ENCODE measurements at regions of chr20 and their contacts with region 1.

Region 1: DNA sequence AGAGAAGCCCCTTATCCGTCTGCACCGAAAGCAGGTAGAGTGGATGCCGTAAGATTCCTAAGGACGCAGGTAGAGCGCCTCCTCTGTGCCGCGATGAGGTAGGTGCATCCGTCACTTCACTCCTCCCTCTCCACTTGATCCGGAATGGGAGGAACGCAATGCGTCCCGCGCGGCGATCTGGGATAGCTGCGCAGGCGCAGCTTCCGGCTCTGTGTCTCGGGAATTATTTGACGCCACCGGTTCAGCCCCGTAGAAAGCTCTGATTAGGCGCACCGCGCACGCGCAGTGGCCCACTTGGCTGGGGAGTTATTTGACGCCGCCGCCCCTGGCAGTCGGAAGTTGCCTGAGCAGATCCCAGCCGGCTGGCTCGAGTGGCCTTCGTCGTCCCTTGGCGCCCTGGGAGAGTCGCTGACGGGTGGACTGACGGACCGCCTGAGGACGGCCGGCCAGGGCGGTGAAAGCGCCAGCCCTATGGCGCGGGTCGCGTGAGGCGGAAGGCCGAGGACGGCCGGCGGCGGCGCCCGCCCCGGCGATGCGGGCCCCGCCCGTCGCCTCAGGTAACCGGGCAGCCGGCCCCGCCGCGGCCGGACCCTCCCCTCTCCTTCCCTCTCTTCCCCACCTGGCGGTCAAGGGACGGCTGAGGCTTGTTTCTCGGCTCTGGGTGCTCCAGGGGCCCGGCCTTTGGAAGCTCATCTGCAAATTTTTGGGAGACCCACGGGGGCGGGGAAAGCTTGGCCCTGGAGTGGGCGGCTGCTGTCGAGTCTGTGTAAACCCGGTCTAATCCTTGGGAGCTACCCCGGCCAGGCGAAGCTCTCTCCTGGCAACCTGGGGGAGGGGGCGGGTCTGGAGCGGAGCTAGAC is at the start of gene RALGAPB:
- DNase-seq: peak; percentile 66
- H3K4me3 ChIP-seq: peak within 1 kb of the TSS; percentile 83
- CTCF ChIP-seq: peak; percentile 54

Region 2: DNA sequence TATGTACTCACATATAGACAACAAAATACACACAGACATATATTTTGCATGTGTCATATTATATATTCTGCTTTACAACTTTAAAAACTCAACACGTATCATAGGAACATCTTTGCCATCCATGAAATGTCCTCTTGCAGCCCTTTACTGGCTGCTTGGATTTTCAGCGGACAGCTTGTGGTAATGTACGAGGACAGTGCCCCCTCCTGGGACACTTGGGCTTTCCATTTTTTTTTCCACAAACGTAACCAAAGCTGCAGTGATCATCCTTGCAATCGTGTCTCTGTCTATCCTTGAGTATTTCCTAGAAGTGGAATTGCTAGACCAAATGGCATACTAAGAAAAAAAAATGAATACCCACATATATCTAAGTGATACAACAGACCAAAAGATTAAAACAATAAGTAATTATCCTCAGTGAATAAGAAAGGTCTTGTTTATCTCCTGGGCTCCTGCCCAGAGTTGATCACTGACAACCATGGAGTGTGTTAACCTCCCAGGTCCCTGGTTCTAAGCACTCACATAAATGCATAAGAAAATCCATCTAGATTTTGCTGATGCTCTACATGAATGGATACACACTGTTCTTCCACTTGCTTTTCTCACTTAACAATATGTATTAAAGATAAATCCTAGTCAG is 150.7 kb before region 1 on chr20:
- CTCF ChIA-PET with region 1: no interaction called
- POLR2A ChIA-PET with region 1: no interaction called
- DNase-seq: no peak
- H3K4me3 ChIP-seq: no peak overlapping the region
- CTCF ChIP-seq: peak; percentile 58

Region 3: DNA sequence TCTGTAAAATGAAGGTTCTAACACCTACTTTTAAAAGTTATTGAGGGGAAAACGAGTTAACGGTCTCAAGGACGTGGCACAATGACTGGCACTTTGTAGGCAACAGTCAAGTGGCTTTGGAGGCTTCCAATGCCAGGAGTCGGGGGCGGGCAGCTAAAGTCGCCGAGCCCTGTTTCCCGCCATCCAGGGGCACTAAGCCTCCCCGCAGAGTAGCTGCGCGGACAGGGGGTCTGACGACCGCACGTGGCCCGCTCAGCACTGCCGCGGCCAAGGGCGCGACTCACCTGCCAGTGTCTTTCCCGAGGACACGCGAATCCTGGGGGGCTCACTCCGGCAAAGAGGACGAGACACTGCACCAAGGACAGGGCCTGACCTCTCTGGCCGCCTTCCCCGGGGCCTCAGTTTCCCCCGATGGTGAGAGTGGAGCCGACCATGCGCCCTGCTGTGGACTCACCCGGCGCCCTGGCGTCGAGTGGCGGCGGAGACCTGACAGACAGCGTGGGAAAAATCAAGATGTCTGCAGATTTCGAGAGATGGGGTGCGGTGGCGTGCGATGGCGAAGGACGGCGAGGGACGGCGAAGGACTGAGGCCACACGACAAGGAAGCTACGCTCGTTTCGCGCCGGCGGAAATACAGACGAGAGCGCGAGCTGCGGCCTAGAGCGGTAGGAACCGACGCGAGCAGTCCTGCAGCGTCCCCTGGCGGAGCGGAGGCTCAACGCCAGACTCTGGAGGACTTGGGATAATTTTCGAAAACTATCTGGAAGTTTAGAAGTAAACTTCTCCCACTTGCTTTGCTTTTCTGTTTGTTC is 37.8 kb before region 1 on chr20 and contains the start of gene SNHG17:
- CTCF ChIA-PET with region 1: interaction called, 15 read pairs
- POLR2A ChIA-PET with region 1: interaction called, 12 read pairs
- DNase-seq: peak; percentile 76
- H3K4me3 ChIP-seq: peak within 1 kb of the TSS; percentile 92
- CTCF ChIP-seq: peak; percentile 99

Region 4: DNA sequence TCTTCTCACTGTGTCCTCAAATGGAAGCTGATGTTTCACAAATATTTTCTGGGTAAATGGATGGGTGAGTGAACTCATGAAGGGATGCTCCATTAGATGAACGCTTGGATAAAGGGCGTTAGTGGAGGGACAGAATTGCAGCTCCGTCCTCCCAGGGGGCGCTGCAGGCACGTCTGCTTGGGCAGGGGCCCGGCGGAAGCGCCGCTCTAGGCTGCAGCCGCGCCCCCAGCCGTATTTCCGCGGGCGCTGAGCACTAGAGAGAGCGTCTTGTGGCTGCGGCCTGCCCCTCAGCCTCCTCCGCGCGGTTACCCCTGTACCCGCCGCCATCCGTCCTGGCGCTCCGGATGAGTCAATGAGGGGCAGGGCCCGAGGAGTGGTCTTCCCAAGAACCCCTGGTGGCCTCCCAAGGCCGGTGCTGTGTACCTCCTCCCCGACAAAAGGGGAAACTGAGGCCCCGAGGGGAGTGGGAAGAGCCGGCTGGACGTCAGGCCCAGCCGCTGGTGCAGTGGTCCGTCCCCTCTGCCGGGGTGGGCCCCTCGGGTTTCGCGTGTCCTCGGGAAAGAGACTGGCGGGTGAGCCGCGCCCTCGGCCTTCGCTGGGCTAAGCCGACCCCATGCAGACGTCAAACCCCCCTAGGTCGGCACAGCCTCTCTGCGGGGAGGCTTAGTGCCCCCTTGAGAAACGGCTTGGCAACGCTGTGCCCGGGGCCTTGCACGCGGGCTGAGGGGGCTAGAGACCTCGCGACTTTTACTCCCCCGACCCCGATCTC is 26.1 kb before region 1 on chr20:
- CTCF ChIA-PET with region 1: interaction called, 47 read pairs
- POLR2A ChIA-PET with region 1: interaction called, 6 read pairs
- DNase-seq: peak; percentile 67
- H3K4me3 ChIP-seq: peak overlapping the region; percentile 83
- CTCF ChIP-seq: peak; percentile 97

Region 5: GRCh38 chr20:38453941-38454340 is 18.8 kb before region 1 on chr20:
- CTCF ChIA-PET with region 1: interaction called, 47 read pairs
- POLR2A ChIA-PET with region 1: interaction called, 6 read pairs
- DNase-seq: no peak
- H3K4me3 ChIP-seq: no peak overlapping the region
- CTCF ChIP-seq: no peak

Region 6: GRCh38 chr20:38485041-38485440 is 12.3 kb after region 1 on chr20:
- CTCF ChIA-PET with region 1: interaction called, 32 read pairs
- POLR2A ChIA-PET with region 1: no interaction called
- DNase-seq: no peak
- H3K4me3 ChIP-seq: no peak overlapping the region
- CTCF ChIP-seq: no peak

Region 7: GRCh38 chr20:38665094-38665865 is 192.5 kb after region 1 on chr20:
- CTCF ChIA-PET with region 1: no interaction called
- POLR2A ChIA-PET with region 1: no interaction called
- DNase-seq: no peak
- H3K4me3 ChIP-seq: no peak overlapping the region
- CTCF ChIP-seq: no peak

Measured in AG04449 (cell line).